ENCODE measurements at regions of chr15 and their contacts with region 1.

Region 1: GRCh38 chr15:48352474-48353072 is 21.3 kb downstream of the DUT start:
- DNase-seq: peak; percentile 61
- H3K4me3 Mint-ChIP-seq: no peak overlapping the region
- H3K27ac Mint-ChIP-seq: no peak overlapping the region
- H3K4me1 Mint-ChIP-seq: no peaks in the 10 kb centered on the region
- H3K27me3 Mint-ChIP-seq: peaks cover 2% of the 10 kb centered on the region

Region 2: DNA sequence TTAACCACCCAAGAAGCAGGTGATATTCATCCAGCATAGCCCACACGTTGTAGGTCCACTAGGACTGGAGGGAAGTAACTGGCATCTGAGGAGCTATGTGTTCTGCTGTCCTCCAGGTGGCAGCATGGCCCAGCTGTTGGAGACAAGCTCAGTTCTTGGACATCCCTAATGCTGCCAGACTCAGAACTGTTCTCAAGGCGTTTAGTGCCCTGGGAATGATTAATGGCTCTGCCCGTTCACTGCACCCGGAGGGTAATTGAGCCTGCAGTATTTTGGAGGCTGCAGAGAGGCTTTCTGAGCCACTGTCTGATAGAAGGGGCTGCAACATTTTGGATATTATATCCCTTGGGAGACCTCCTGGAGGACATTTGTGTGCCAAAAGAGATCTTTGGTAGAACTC is 1156.5 kb before region 1 on chr15:
- CTCF ChIA-PET with region 1: interaction called, 8 read pairs
- POLR2A ChIA-PET with region 1: no interaction called
- intact Hi-C with region 1: loop called (anchors 5 kb)
- DNase-seq: peak; percentile 56
- H3K4me3 Mint-ChIP-seq: no peak overlapping the region
- H3K27ac Mint-ChIP-seq: no peak overlapping the region
- H3K4me1 Mint-ChIP-seq: no peaks in the 10 kb centered on the region
- H3K27me3 Mint-ChIP-seq: peaks cover 1% of the 10 kb centered on the region

Region 3: GRCh38 chr15:47577000-47577399 is 775.6 kb before region 1 on chr15:
- CTCF ChIA-PET with region 1: no interaction called
- POLR2A ChIA-PET with region 1: no interaction called
- intact Hi-C with region 1: no loop called
- DNase-seq: no peak
- H3K4me3 Mint-ChIP-seq: no peak overlapping the region
- H3K27ac Mint-ChIP-seq: no peak overlapping the region
- H3K4me1 Mint-ChIP-seq: no peaks in the 10 kb centered on the region
- H3K27me3 Mint-ChIP-seq: no peaks in the 10 kb centered on the region

Measured in activated CD4-positive, alpha-beta memory T cell treated with anti-CD3 and anti-CD28 coated beads for 36 hours (primary cell).